Heart left ventricle (tissue), 16 donors: ENCODE measurements at regions of chr13 and their contacts with region 1.

Region 1: DNA sequence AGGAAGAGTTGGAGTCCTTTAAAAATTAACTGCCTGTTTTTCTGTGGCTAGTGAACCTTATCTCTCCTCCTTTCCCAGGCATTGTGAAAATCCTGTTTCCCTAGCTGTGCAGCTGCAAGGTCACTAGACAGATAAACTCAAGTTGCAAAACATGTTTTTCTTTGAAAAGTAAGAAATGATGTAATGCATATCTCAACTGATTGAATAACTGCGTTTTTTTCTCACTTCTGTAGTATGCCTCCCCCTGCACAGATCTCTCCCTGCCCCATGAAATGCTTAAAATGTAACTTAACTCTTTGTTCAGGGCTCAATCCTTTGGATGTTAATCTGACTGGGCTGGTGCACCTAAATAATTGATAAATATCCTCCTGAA is 27.7 kb upstream of the CYSLTR2 start:
- DNase-seq: peak in 1 of 5 donors; percentile 39
- ATAC-seq: peak; percentile 21 to 58 (median 52)
- H3K4me3 ChIP-seq: no peak overlapping the region
- H3K27ac ChIP-seq: peak overlapping the region; percentile 63 to 90 (median 82)
- H3K4me1 ChIP-seq: peaks cover 0 to 37% (median 14%) of the 10 kb centered on the region in 12 donors
- H3K27me3 ChIP-seq: no peaks in the 10 kb centered on the region
- CTCF ChIP-seq: no peak
- POLR2A ChIP-seq: no peak

Region 2: GRCh38 chr13:48731957-48732569 is 106.0 kb after region 1 on chr13:
- intact Hi-C with region 1: loop called in 2 of 10 experiments (anchors 5 to 10 kb)
- DNase-seq: peak in 4 of 5 donors; percentile 38 to 74 (median 42)
- ATAC-seq: peak in 3 of 4 donors; percentile 53 to 75 (median 55)
- H3K4me3 ChIP-seq: peak overlapping the region in 4 of 12 donors; percentile 16 to 34 (median 24)
- H3K27ac ChIP-seq: peak overlapping the region in 1 of 12 donors; percentile 39
- H3K4me1 ChIP-seq: peaks cover 0 to 17% (median 1%) of the 10 kb centered on the region in 12 donors
- H3K27me3 ChIP-seq: no peaks in the 10 kb centered on the region
- CTCF ChIP-seq: peak; percentile 39 to 73 (median 54)
- POLR2A ChIP-seq: no peak

Region 3: DNA sequence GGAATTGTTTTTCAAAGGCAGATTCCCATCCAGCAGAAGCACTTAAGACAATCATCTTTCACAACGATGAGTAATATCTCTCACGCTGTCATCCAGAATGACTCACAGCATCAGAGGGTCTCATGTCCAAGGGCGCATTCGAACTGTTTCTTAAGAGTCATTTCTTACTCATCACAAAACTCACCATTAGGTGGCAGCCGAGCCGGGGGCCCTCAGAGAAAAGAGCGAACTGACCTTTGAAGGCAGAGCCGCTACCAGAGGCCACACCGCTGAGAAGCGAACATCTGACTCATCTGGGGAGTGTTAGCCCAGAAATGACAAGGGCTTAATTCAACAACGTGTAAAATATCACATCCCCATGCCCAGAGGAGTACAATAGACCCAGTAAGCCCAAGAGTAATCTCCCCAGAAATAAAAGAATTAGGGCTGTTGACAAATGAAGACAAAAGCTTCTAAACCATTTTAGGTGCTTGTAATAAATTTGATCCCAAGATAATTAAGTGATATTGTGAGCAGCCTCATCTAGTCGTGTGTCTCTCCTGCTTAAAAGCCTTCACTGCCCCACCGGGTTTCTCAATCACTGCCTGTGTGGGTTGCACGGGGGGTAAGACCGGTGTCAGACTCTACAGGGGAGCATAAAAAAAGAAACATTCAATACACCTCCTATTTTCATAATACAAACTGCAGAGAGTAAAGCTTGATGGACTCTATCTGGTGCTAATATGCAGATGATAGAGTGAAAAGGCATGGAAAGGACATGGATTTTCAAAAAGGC is 123.8 kb after region 1 on chr13:
- intact Hi-C with region 1: loop called in 1 of 10 experiments (anchors 10 kb)
- DNase-seq: peak; percentile 74 to 90 (median 86)
- ATAC-seq: peak; percentile 66 to 91 (median 85)
- H3K4me3 ChIP-seq: no peak overlapping the region
- H3K27ac ChIP-seq: peak overlapping the region; percentile 62 to 86 (median 82)
- H3K4me1 ChIP-seq: peaks cover 0 to 36% (median 20%) of the 10 kb centered on the region in 12 donors
- H3K27me3 ChIP-seq: no peaks in the 10 kb centered on the region
- CTCF ChIP-seq: peak; percentile 26 to 69 (median 46)
- POLR2A ChIP-seq: no peak

Region 4: GRCh38 chr13:48790966-48791365 is 164.9 kb after region 1 on chr13:
- intact Hi-C with region 1: no loop called
- DNase-seq: no peak
- ATAC-seq: no peak
- H3K4me3 ChIP-seq: no peak overlapping the region
- H3K27ac ChIP-seq: no peak overlapping the region
- H3K4me1 ChIP-seq: peaks cover 0 to 16% (median 0%) of the 10 kb centered on the region in 12 donors
- H3K27me3 ChIP-seq: no peaks in the 10 kb centered on the region
- CTCF ChIP-seq: no peak
- POLR2A ChIP-seq: no peak